K562 (cell line): ENCODE measurements at regions of chr21 and their contacts with region 1.

Region 1: DNA sequence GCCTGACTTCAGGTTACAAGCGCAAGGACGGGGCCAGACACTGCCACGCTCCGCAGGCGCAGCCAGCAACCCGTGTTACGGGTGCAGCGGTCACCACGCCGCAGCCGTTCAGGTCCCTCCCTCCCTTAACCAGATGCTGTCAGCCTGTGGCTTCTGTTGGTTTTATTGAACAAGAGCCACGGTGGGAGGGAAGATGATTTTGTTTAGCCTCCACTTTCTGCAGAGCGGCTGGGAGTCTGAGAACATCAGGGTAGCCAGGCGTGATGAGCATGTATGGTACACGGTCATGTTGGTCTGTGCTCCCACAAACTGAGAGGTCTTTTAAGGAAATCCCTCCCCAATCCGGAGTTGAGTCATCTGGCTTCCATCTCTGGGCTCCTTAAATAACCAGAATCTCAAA is 18.5 kb upstream of the ADARB1 start:
- DNase-seq: no peak
- ATAC-seq: no peak
- H3K4me3 ChIP-seq: no peak overlapping the region
- H3K27ac ChIP-seq: no peak overlapping the region
- H3K4me1 ChIP-seq: peaks cover 0 to 6% of the 10 kb centered on the region in 2 experiments; a peak in 1 of 5 replicates
- H3K27me3 ChIP-seq: peaks cover 60 to 81% of the 10 kb centered on the region in 2 experiments
- CTCF ChIP-seq: no peak
- EP300 ChIP-seq: no peak
- POLR2A ChIP-seq: no peak
- RAD21 ChIP-seq: no peak

Region 2: GRCh38 chr21:44989537-44989886 is 66.3 kb before region 1 on chr21:
- CTCF ChIA-PET with region 1: no interaction called
- POLR2A ChIA-PET with region 1: no interaction called
- in situ Hi-C with region 1: no loop called
- intact Hi-C with region 1: no loop called
- DNase-seq: no peak
- ATAC-seq: no peak
- H3K4me3 ChIP-seq: no peak overlapping the region
- H3K27ac ChIP-seq: no peak overlapping the region
- H3K4me1 ChIP-seq: peaks cover 0 to 80% of the 10 kb centered on the region in 2 experiments; a peak in 1 of 5 replicates
- H3K27me3 ChIP-seq: peaks cover 33 to 68% of the 10 kb centered on the region in 2 experiments
- CTCF ChIP-seq: no peak
- EP300 ChIP-seq: no peak
- POLR2A ChIP-seq: no peak
- RAD21 ChIP-seq: no peak

Region 3: DNA sequence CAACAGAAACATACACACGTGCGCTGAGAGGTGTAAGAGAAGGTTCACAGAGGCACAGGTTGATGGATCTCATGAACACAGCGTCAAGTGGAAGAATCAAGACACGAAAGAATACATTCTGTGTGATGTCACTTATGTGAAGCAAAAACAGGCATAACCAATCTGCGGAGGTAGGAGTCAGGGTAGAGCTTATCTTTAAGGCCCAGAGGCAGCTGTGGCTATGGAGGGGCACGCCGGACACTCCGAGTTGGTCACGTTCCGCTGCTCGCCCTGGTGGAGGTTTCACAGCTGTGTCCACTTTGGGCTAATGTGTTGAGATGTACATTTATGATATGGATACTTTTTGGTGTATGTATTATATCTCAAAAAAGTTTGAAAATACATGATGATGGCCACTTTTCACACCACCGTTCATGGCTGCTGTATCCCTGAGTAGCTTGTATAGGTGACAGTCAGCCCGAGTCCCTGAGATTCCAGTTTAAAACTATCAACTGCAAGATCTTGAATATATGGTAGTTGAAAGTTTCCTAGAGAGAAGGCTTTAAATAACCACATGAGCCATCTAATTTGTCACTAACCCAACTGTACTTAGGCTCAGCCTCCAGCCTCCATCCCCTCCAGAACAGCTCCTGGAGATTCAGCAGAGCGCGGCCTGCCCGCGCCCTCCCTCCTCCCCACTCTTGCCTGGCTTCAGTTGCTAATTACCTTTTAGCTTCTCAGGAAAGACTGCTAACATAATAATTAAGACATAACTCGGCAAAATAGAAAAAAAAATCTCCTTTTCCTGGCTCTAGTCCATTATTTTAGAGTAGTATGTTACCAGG is 11.8 kb after region 1 on chr21:
- CTCF ChIA-PET with region 1: no interaction called
- POLR2A ChIA-PET with region 1: interaction called, 21 read pairs
- in situ Hi-C with region 1: no loop called
- intact Hi-C with region 1: no loop called
- DNase-seq: peak; percentile 88 to 96 (median 90)
- ATAC-seq: peak; percentile 95
- H3K4me3 ChIP-seq: no peak overlapping the region
- H3K27ac ChIP-seq: no peak overlapping the region
- H3K4me1 ChIP-seq: peaks cover 29 to 34% of the 10 kb centered on the region in 2 experiments; a peak in 4 of 5 replicates
- H3K27me3 ChIP-seq: no peaks in the 10 kb centered on the region; a peak in 1 of 5 replicates
- CTCF ChIP-seq: peak; percentile 33 to 47 (median 37); a peak in 5 of 6 replicates
- EP300 ChIP-seq: peak; percentile 87
- POLR2A ChIP-seq: no peak
- RAD21 ChIP-seq: 0 out of 4 replicates have a peak, but pooled peaks of 1 of the 2 experiments have one; percentile 26